GM12878 (cell line): ENCODE measurements at regions of chr9 and their contacts with region 1.

Region 1: DNA sequence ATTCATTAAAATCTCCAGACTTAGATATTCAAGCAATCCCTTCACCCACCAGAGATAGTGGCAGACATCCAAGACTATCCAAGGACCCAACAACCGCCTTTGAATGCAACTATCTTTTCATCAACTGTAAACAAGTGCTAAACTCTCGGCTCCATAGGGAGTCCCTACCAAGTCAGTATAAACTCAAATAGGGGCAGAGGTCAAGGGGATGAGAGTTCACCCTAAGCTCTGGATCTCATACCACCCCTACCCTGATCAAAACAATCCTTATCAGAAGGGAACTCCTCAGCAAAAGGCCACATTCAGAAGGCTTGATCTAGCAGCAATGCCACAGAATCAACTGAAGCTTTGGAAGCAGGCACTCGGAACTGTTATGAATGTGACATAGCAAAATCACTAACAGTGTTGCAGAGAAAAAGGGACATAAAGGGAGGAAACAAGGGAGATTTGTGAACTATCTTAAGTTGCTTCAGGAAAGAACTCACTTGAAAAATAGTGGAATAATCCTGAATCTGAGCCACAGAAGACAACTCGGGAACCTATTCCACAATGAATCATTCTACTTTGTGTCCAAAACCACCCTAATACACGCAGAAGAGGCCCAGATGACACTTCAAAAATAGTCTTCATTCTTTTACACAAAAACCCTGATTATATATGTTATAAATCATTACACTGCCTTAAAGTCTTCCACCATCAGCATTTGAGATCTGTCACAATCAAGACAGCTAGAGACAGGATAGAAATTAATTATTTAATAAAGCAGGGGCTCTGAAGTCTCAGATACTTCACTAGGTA is 49.8 kb downstream of the NR6A1 start:
- DNase-seq: no peak
- ATAC-seq: no peak
- H3K4me3 ChIP-seq: no peak overlapping the region
- H3K27ac ChIP-seq: no peak overlapping the region
- H3K4me1 ChIP-seq: no peaks in the 10 kb centered on the region
- H3K27me3 ChIP-seq: no peaks in the 10 kb centered on the region
- CTCF ChIP-seq: no peak
- EP300 ChIP-seq: no peak
- POLR2A ChIP-seq: no peak
- RAD21 ChIP-seq: no peak

Region 2: DNA sequence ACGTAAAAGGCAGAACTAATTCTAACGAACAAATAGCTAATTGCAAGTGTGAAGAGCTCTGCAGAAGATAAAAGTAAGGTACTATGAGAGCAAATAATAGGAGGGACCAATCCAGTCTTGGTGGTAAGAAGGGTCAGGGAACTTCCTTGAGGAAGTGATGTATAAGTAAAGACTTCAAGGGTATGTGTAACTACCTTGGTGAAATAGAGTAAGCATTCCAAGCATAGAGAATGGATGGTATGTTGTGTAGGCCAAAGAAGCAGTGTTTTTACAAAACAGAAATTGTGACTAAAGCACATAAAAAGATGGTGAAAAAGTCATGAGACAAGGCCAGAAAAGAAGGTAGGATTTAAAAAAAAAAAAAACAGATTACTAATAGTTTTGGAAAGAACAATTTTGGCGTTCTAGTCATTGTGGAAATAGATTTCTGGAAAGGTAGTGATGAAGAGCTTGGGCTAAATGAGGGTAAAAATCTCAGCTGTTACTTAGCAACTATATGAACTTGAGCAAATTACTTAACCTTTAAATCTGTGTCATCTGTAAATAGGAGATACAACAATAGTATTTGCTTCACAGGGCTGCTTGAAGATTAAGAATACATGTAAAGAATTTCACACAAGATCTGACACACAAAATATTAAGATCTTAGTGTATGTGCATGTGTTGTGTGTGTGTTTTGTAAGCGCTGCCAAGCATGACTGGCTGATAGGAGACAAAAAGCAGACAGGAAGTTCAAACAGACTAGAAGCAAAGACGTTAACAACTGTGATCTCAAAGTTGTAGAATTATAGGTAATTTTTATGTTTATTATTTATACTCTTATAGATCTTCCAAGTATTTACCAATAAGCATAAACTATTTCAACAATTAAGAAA is 23.7 kb before region 1 on chr9:
- CTCF ChIA-PET with region 1: no interaction called
- POLR2A ChIA-PET with region 1: no interaction called
- RAD21 ChIA-PET with region 1: no interaction called
- SMC1A ChIA-PET with region 1: no interaction called
- in situ Hi-C with region 1: no loop called
- intact Hi-C with region 1: no loop called
- DNase-seq: no peak
- ATAC-seq: no peak
- H3K4me3 ChIP-seq: no peak overlapping the region
- H3K27ac ChIP-seq: no peak overlapping the region
- H3K4me1 ChIP-seq: no peaks in the 10 kb centered on the region
- H3K27me3 ChIP-seq: no peaks in the 10 kb centered on the region
- CTCF ChIP-seq: no peak
- EP300 ChIP-seq: no peak
- POLR2A ChIP-seq: no peak
- RAD21 ChIP-seq: no peak

Region 3: GRCh38 chr9:124754289-124754688 is 33.0 kb after region 1 on chr9:
- CTCF ChIA-PET with region 1: interaction called, 201 read pairs
- POLR2A ChIA-PET with region 1: no interaction called
- RAD21 ChIA-PET with region 1: interaction called, 5 read pairs
- SMC1A ChIA-PET with region 1: interaction called, 3 read pairs
- in situ Hi-C with region 1: no loop called
- intact Hi-C with region 1: loop called (anchors 5 kb)
- DNase-seq: no peak
- ATAC-seq: peak; percentile 50; the same call in 1 of the 3 replicates
- H3K4me3 ChIP-seq: no peak overlapping the region
- H3K27ac ChIP-seq: no peak overlapping the region
- H3K4me1 ChIP-seq: peaks cover 14% of the 10 kb centered on the region
- H3K27me3 ChIP-seq: no peaks in the 10 kb centered on the region
- CTCF ChIP-seq: peak; percentile 10 to 41 (median 12); a peak in 3 of 6 replicates
- EP300 ChIP-seq: no peak
- POLR2A ChIP-seq: no peak
- RAD21 ChIP-seq: peak; percentile 57

Region 4: GRCh38 chr9:124818431-124819281 is 97.3 kb after region 1 on chr9:
- CTCF ChIA-PET with region 1: no interaction called
- POLR2A ChIA-PET with region 1: no interaction called
- RAD21 ChIA-PET with region 1: no interaction called
- SMC1A ChIA-PET with region 1: no interaction called
- in situ Hi-C with region 1: no loop called
- intact Hi-C with region 1: no loop called
- DNase-seq: no peak
- ATAC-seq: peak; percentile 75
- H3K4me3 ChIP-seq: no peak overlapping the region
- H3K27ac ChIP-seq: 0 out of 2 replicates have a peak overlapping the region, but pooled peaks have one; percentile 28
- H3K4me1 ChIP-seq: peaks cover 11% of the 10 kb centered on the region
- H3K27me3 ChIP-seq: no peaks in the 10 kb centered on the region
- CTCF ChIP-seq: no peak
- EP300 ChIP-seq: no peak
- POLR2A ChIP-seq: peak; percentile 52; the same call in 1 of the 2 replicates
- RAD21 ChIP-seq: no peak

Region 5: DNA sequence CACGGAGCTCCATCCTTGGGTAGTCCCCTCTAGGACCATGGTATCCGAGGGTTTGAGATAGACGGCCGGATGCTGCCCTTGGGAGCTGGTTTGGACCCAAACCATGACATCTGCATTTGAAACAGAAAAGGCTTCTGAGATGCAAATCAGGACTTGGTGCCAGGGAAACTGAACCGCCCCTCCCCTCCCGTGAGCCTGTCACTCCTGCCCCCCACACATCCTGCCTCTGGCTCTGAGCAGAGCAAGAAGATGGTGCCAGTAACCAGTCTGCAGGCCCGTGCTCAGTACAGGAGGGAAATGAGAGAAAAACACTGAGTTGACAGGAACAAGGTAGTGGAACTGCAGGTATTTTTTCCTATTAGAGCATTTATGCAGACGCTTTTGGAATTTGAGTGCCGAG is 159.2 kb after region 1 on chr9:
- CTCF ChIA-PET with region 1: no interaction called
- POLR2A ChIA-PET with region 1: no interaction called
- RAD21 ChIA-PET with region 1: no interaction called
- SMC1A ChIA-PET with region 1: no interaction called
- in situ Hi-C with region 1: no loop called
- intact Hi-C with region 1: no loop called
- DNase-seq: no peak
- ATAC-seq: peak; percentile 64
- H3K4me3 ChIP-seq: no peak overlapping the region
- H3K27ac ChIP-seq: peak overlapping the region; percentile 13; the same call in 1 of the 2 replicates
- H3K4me1 ChIP-seq: peaks cover 6% of the 10 kb centered on the region
- H3K27me3 ChIP-seq: no peaks in the 10 kb centered on the region
- CTCF ChIP-seq: no peak
- EP300 ChIP-seq: no peak
- POLR2A ChIP-seq: no peak
- RAD21 ChIP-seq: no peak